ENCODE measurements at regions of chr4 and their contacts with region 1.

Region 1: DNA sequence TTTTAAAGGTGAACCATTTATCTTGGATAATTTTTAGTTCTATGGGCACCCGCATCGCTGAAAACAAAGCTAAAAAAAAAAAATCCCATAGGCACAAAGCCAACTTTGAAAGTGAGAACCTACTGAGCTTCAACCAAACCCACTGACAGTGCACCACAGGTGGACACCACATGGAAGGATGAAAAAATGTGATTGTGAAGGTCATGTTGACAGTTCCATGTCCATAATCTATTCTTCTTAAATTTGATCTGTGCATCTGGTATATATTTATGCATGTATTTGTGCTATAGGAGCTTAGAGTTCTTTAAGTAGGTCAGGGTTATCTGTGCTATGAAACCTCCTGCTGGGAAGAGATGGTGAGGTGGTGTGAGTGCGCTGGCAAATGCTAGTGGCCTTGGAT is 374.3 kb downstream of the SPRY1 start:
- DNase-seq: no peak
- ATAC-seq: no peak

Region 2: GRCh38 chr4:124262211-124263179 is 491.6 kb after region 1 on chr4:
- intact Hi-C with region 1: loop called in 1 of 2 experiments (anchors 5 kb)
- DNase-seq: peak; percentile 43
- ATAC-seq: peak; percentile 87 to 92